BJ (cell line): ENCODE measurements at regions of chr20 and their contacts with region 1.

Region 1: GRCh38 chr20:33285861-33286495 is 3.0 kb downstream of the BPIFB1 start:
- DNase-seq: no peak
- H3K4me3 ChIP-seq: no peak overlapping the region
- H3K27me3 ChIP-seq: peaks cover 14% of the 10 kb centered on the region
- CTCF ChIP-seq: no peak

Region 2: GRCh38 chr20:33119725-33120720 is 166.0 kb before region 1 on chr20:
- CTCF ChIA-PET with region 1: no interaction called
- POLR2A ChIA-PET with region 1: no interaction called
- DNase-seq: no peak
- H3K4me3 ChIP-seq: no peak overlapping the region
- H3K27me3 ChIP-seq: no peaks in the 10 kb centered on the region
- CTCF ChIP-seq: no peak

Region 3: DNA sequence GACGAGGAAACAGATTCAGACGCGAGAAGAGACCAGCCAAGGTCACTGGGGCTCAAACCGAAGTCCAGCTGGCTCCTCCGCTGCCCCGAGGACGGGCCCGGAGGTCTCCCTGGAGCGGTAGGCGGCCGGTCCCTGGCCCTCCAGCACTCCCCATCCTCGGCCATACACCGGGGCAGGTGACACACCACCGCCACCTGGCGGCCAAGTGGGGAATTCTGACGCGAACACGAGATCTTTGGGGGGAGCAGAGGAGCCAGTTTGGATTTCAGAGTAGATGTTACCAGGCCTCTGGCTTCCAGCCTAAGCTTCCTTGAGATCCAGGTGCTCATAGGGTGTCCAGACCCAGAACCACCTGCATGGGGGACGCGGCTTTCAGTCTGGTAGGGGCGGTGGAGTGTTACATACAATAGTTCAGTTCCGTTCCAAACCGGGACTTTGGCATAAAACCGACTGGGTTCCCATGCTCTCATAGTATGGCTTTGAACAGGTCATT is 13.2 kb after region 1 on chr20:
- CTCF ChIA-PET with region 1: interaction called, 17 read pairs
- POLR2A ChIA-PET with region 1: no interaction called
- DNase-seq: no peak
- H3K4me3 ChIP-seq: no peak overlapping the region
- H3K27me3 ChIP-seq: peaks cover 15% of the 10 kb centered on the region
- CTCF ChIP-seq: peak; percentile 94